ENCODE measurements at regions of chr10 and their contacts with region 1.

Region 1: DNA sequence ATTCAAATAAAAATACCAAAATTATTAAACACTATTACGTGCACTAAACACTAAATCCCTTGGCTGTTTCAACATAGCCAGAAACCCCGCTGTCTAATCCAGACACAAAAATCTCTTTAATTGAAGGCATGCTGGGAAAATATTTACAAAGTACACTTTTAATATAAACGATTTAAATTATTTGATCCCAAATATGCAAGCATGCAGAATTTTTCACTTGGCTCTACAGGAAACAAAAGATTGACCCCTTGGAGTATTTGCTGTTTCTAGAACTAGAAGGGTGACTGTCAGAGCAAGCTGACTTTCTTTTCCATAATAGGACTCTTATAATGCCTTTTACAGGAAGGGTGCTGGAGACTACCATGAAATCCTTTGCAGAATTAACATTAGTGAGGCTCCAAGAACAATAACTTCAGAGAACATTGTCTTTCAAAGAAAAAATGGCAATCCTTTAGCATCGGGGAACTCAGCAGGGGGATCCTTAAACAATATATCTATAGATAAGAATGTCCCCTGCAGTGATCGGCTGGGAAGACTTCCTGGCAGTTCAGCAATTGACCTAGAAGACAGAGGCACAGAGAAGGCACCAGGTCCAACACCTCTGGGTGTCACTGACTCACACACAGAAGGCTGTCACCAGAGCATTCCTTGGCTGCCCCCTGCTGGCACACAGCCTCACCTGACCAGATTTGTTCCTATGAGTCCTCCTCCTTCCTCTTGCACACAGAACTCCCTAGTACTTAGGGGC is 55.8 kb upstream of the MRLN start:
- DNase-seq: peak; percentile 90
- H3K4me3 Mint-ChIP-seq: no peak overlapping the region
- H3K27ac Mint-ChIP-seq: no peak overlapping the region
- H3K4me1 Mint-ChIP-seq: no peaks in the 10 kb centered on the region
- H3K27me3 Mint-ChIP-seq: no peaks in the 10 kb centered on the region

Region 2: GRCh38 chr10:58781873-58782488 is 1027.1 kb before region 1 on chr10:
- CTCF ChIA-PET with region 1: no interaction called
- intact Hi-C with region 1: loop called (anchors 5 kb)
- DNase-seq: peak; percentile 4
- H3K4me3 Mint-ChIP-seq: no peak overlapping the region
- H3K27ac Mint-ChIP-seq: no peak overlapping the region
- H3K4me1 Mint-ChIP-seq: no peaks in the 10 kb centered on the region
- H3K27me3 Mint-ChIP-seq: peaks cover 8% of the 10 kb centered on the region

Region 3: DNA sequence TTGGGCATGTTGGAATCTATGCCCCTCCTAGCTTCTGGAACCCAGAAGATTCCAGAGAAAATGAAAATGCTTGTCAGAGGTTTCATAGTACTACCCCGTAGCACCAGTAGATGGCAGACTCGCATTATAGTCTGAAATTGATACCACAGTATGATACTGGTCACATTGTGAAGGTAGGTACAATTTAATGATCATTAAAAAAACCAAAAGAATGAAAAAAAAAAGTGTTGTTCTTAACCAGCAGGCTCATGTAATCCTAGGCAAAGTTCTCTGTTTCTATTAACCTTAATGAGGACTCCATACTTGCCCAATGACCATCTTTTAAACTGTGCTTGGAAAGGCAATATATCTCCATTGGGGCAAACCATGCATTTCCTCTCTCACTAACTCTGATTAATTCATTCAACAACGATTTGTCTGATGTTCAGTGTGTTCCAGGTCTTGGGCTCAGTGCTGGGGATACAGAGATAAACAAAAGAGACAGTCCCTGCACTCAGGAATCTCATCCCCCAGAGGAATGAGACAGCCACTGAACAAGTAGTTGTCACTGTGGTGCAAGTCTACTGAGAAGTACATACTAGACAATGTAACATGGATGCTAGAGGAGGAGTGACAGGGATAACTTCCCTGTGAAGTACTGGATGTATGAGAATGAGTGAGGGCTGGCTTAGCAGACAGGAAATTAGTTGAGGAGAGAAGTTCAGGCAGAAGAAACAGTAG is 856.2 kb before region 1 on chr10:
- CTCF ChIA-PET with region 1: no interaction called
- intact Hi-C with region 1: loop called (anchors 5 kb)
- DNase-seq: peak; percentile 32
- H3K4me3 Mint-ChIP-seq: no peak overlapping the region
- H3K27ac Mint-ChIP-seq: no peak overlapping the region
- H3K4me1 Mint-ChIP-seq: no peaks in the 10 kb centered on the region
- H3K27me3 Mint-ChIP-seq: no peaks in the 10 kb centered on the region

Region 4: GRCh38 chr10:59240582-59241183 is 568.4 kb before region 1 on chr10:
- CTCF ChIA-PET with region 1: no interaction called
- intact Hi-C with region 1: loop called (anchors 5 kb)
- DNase-seq: no peak
- H3K4me3 Mint-ChIP-seq: no peak overlapping the region
- H3K27ac Mint-ChIP-seq: no peak overlapping the region
- H3K4me1 Mint-ChIP-seq: no peaks in the 10 kb centered on the region
- H3K27me3 Mint-ChIP-seq: no peaks in the 10 kb centered on the region

Region 5: GRCh38 chr10:59709395-59710125 is 99.5 kb before region 1 on chr10 and contains the start of gene SLC16A9:
- CTCF ChIA-PET with region 1: no interaction called
- intact Hi-C with region 1: loop called (anchors 5 kb)
- DNase-seq: peak; percentile 89
- H3K4me3 Mint-ChIP-seq: peak within 1 kb of the TSS; percentile 72
- H3K27ac Mint-ChIP-seq: no peak within 1 kb of the TSS
- H3K4me1 Mint-ChIP-seq: peaks cover 8% of the 10 kb centered on the region
- H3K27me3 Mint-ChIP-seq: peaks cover 62% of the 10 kb centered on the region
- total RNA-seq, gene SLC16A9: 0.84 to 0.86 TPM

Region 6: GRCh38 chr10:60032723-60033122 is 223.7 kb after region 1 on chr10:
- CTCF ChIA-PET with region 1: no interaction called
- intact Hi-C with region 1: loop called (anchors 1 kb)
- DNase-seq: peak; percentile 79
- H3K4me3 Mint-ChIP-seq: no peak overlapping the region
- H3K27ac Mint-ChIP-seq: no peak overlapping the region
- H3K4me1 Mint-ChIP-seq: no peaks in the 10 kb centered on the region
- H3K27me3 Mint-ChIP-seq: no peaks in the 10 kb centered on the region

Measured in activated naive CD4-positive, alpha-beta T cell treated with anti-CD3 and anti-CD28 coated beads for 36 hours (primary cell).